Mucosa of descending colon (tissue), 3 donors: ENCODE measurements at regions of chr1 and their contacts with region 1.

Region 1: DNA sequence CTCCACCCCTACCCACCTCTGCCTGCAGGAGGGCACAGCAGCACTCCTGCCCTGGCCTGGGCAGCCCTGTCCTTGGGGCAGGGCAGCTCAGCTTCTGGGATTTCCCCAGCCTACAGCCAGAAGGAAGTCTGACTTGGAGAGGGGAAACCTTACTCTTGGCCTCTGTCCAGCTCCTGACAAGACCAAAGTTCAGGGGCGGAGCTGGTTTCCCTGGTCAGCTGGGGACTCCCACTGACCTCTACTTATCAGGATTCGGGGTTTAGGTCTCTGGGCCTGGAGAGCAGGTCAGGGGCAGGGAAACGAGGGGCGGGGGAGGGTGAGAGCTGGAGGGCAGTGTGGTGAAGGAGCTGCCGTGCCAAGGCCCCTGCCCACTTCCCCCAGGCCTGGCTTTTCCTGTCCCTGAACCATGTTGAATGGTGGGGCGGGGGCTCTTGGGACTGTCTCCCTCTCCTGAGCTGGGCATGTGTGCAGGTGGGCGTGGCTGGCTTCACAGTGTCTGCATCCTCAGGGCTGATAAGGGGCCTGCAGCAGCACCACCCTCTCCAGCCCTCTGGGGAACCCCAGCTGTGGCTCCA is 16.8 kb upstream of the ETV3 start:
- DNase-seq: peak; percentile 78 to 87 (median 79)
- ATAC-seq: peak; percentile 89
- H3K4me3 ChIP-seq: no peak overlapping the region
- H3K4me1 ChIP-seq: peaks cover 20% of the 10 kb centered on the region
- CTCF ChIP-seq: no peak

Region 2: DNA sequence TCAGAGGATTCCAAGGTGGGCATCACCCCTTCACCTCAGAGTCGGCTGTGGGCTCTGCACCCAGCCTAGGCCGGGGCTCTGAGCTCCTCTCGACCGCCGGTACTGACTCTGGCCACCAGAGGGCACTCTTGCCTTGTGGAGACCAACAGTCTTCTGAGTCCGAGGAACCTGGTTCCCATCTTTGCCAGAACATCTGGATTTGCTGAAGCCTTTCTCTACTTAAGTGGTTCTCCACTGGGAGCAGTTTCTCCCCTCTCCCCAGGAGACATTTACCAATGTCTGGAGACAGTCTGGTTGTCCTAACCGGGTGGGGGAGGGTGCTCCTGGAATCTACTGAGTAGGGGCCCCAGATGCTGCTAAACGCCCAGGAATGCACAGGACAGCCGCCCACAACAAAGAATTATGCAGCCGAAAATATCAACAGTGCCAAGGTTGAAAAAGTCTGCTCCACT is 64.8 kb before region 1 on chr1:
- intact Hi-C with region 1: loop called (anchors 1 to 2 kb)
- DNase-seq: peak; percentile 76 to 94 (median 88)
- ATAC-seq: peak; percentile 93
- H3K4me3 ChIP-seq: no peak overlapping the region
- H3K4me1 ChIP-seq: no peaks in the 10 kb centered on the region
- CTCF ChIP-seq: peak; percentile 83